Endothelial cell of umbilical vein (primary cell): ENCODE measurements at regions of chr6 and their contacts with region 1.

Region 1: GRCh38 chr6:46935674-46936073 is 13.9 kb upstream of the ADGRF5 start:
- DNase-seq: peak; percentile 85
- H3K4me3 ChIP-seq: no peak overlapping the region
- H3K27ac ChIP-seq: peak overlapping the region; percentile 3
- H3K4me1 ChIP-seq: peaks cover 17% of the 10 kb centered on the region
- H3K27me3 ChIP-seq: peaks cover 0 to 4% of the 10 kb centered on the region in 2 experiments
- CTCF ChIP-seq: no peak
- POLR2A ChIP-seq: peak; percentile 47

Region 2: DNA sequence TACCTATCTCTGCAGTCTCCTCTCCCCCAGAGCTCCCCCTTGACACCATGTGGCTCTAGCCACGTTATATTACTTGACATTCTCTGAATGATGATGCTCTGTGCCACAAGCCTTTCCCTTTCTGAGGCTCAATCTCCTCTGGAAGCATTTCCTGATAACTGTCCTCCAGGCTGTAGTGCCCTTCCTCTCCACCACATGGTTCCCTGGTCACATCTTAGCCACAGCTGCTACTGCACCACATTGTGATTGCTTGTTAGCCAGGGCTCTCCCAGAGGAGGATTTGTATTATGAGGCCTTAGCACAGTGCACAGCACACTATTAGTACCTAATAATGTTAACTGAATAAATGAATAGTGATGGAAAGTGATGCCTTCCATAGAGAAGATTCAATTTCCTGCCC is 380.5 kb before region 1 on chr6:
- CTCF ChIA-PET with region 1: no interaction called
- POLR2A ChIA-PET with region 1: no interaction called
- dilution Hi-C with region 1: no loop called
- intact Hi-C with region 1: no loop called
- DNase-seq: no peak
- H3K4me3 ChIP-seq: no peak overlapping the region
- H3K27ac ChIP-seq: no peak overlapping the region
- H3K4me1 ChIP-seq: no peaks in the 10 kb centered on the region
- H3K27me3 ChIP-seq: no peaks in the 10 kb centered on the region
- CTCF ChIP-seq: no peak
- POLR2A ChIP-seq: no peak

Region 3: DNA sequence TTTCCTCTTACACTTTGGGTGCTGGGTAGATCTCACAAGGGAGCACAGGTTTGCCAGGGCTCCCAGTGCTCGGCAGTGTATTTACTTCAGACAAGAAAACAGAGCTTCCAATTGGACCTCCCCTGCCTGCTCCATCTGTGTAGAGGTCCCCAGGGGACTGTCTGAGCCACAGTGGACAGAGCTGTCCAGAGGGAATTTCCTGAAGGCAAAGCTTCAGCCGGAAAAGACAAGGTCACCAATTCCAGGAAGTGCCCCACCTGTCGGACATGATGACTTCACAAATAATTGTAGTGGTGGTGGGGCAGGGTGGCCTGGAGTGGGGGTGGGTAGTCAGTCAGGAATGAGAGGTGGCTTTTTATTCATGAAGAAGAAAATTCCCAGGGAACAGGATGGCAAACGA is 32.5 kb before region 1 on chr6:
- CTCF ChIA-PET with region 1: no interaction called
- POLR2A ChIA-PET with region 1: no interaction called
- dilution Hi-C with region 1: no loop called
- intact Hi-C with region 1: loop called (anchors 2 kb)
- DNase-seq: no peak
- H3K4me3 ChIP-seq: no peak overlapping the region
- H3K27ac ChIP-seq: peak overlapping the region; percentile 2
- H3K4me1 ChIP-seq: peaks cover 35% of the 10 kb centered on the region
- H3K27me3 ChIP-seq: no peaks in the 10 kb centered on the region
- CTCF ChIP-seq: no peak
- POLR2A ChIP-seq: no peak

Region 4: DNA sequence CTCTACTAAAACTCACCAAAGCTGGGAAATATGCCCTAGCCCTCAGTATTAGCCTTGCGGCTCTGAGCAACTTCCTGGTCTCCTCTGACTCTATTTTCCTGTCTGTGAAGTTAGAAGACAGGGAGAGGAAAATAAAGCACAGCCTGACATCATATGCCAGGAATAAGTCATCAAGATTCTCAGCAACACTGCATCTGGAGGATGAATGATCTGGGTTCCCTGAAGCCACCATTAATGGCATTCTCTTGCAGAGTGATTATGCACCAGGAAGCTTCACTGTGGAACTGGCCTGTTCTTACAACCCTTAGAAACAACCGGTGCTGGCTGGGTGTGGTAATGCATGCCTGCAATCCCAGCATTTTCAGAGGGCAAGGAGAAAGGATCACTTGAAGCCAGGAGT is 26.3 kb before region 1 on chr6:
- CTCF ChIA-PET with region 1: interaction called, 3 read pairs
- POLR2A ChIA-PET with region 1: no interaction called
- dilution Hi-C with region 1: no loop called
- intact Hi-C with region 1: loop called (anchors 1 kb)
- DNase-seq: peak; percentile 93
- H3K4me3 ChIP-seq: no peak overlapping the region
- H3K27ac ChIP-seq: peak overlapping the region; percentile 88
- H3K4me1 ChIP-seq: peaks cover 32% of the 10 kb centered on the region
- H3K27me3 ChIP-seq: no peaks in the 10 kb centered on the region
- CTCF ChIP-seq: peak in 1 of 2 donors; percentile 3
- POLR2A ChIP-seq: no peak